Activated naive CD4-positive, alpha-beta T cell treated with anti-CD3 and anti-CD28 coated beads, Interleukin-2, amount 10 ng/mL, durations not matched to agents 7 days and 5 days (primary cell): ENCODE measurements at regions of chr7 and their contacts with region 1.

Region 1: GRCh38 chr7:155598810-155599210 is 45.7 kb upstream of the RBM33 start:
- DNase-seq: peak; percentile 88
- H3K4me3 Mint-ChIP-seq: no peak overlapping the region
- H3K27ac Mint-ChIP-seq: no peak overlapping the region
- H3K4me1 Mint-ChIP-seq: peaks cover 8% of the 10 kb centered on the region
- H3K27me3 Mint-ChIP-seq: peaks cover 57% of the 10 kb centered on the region

Region 2: DNA sequence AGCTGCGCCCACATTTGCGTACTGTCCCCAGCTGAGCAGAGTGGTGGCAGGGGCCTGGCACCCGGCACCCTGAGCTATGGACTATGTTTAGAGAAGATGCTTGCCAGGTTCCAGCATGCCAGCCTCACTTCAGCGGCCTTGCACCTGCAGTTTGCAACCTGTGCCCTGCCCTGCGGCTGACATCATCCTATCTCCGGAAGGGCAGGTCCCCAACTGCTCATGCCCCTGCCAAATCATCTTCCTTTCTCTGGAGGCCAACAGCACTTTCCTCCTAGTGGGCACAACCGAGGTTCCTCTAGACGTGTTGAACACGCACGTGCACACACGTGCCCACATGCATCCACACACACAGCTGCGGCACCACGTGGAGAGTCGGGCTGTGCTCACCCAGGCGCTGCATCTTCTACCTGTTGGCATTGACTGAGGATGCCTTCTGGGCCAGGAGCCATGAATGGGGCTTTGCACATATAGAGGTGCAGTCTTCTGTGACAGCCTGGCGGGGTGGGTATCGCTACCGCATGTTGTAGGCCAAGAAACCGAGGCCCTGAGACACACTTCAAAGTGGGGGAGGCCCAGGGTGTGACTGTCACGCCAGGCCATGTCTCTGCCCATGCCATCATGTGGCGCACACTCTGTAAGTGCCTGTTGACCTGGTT is 76.9 kb before region 1 on chr7:
- CTCF ChIA-PET with region 1: no interaction called
- DNase-seq: no peak
- H3K4me3 Mint-ChIP-seq: no peak overlapping the region
- H3K27ac Mint-ChIP-seq: no peak overlapping the region
- H3K4me1 Mint-ChIP-seq: no peaks in the 10 kb centered on the region
- H3K27me3 Mint-ChIP-seq: peaks cover 64% of the 10 kb centered on the region

Region 3: GRCh38 chr7:155611808-155612447 is 13.1 kb after region 1 on chr7:
- CTCF ChIA-PET with region 1: interaction called, 12 read pairs
- DNase-seq: no peak
- H3K4me3 Mint-ChIP-seq: no peak overlapping the region
- H3K27ac Mint-ChIP-seq: no peak overlapping the region
- H3K4me1 Mint-ChIP-seq: no peaks in the 10 kb centered on the region
- H3K27me3 Mint-ChIP-seq: peaks cover 13% of the 10 kb centered on the region

Region 4: DNA sequence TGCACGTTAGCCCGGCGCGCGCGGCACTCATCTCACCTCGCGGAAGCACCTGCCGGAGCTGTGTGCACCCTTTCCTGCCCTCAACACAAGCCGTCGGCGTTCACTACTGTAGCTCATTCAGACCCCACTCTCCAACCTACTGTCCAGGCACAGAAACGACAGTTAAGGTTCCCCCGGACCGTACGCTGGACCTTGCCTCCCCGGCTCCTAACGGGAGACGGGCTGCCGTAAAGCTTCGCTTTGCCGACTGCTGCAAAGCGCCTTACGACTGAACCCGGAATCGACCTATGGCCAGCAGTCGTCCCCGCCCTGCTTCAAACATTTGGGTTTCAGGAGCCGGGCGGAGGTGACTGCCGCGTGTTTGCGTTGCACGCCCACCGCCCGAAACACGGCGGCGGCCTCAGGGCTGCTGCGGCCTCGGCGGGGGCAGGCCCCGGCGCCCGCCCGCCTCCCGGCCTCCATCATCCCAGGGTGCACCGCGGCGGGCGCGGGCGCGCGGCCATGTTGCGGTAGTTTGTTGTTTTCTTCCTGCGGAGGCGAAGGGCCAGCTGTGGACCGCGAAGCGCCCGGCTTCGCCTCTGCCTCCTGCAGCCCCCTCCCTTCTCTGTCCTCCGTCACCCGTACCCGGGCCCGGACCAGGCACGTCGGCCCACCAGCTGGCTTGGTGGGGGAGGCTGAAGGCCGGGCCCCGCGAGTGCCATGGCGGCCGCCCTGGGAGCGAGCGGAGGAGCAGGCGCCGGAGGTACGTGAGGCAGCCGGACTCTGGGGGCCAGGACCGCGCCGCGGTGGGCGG is 45.6 kb after region 1 on chr7 and contains the start of gene RBM33:
- CTCF ChIA-PET with region 1: no interaction called
- DNase-seq: peak; percentile 83
- H3K4me3 Mint-ChIP-seq: peak within 1 kb of the TSS; percentile 92
- H3K27ac Mint-ChIP-seq: peak within 1 kb of the TSS; percentile 96
- H3K4me1 Mint-ChIP-seq: peaks cover 49% of the 10 kb centered on the region
- H3K27me3 Mint-ChIP-seq: no peaks in the 10 kb centered on the region

Region 5: DNA sequence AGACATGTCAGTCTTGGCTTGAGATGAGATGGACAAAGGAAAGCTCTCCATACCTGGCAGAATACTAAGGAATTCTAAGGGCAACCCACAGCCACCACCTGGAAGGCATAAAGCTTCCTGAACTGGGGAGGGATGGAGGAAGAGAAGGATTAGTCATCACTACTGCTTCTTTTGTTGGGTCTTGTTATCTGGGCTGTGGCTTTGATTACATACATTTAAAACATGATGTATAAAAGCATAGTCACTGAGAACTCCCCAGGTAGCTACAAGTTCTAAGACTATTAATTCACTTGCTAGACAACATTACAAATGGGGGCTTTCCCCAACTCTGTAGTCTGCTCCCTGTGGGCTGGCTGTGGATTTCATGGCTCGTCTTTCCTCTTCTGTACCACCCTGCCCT is 103.8 kb after region 1 on chr7:
- CTCF ChIA-PET with region 1: interaction called, 31 read pairs
- DNase-seq: no peak
- H3K4me3 Mint-ChIP-seq: no peak overlapping the region
- H3K27ac Mint-ChIP-seq: no peak overlapping the region
- H3K4me1 Mint-ChIP-seq: peaks cover 11% of the 10 kb centered on the region
- H3K27me3 Mint-ChIP-seq: no peaks in the 10 kb centered on the region

Region 6: DNA sequence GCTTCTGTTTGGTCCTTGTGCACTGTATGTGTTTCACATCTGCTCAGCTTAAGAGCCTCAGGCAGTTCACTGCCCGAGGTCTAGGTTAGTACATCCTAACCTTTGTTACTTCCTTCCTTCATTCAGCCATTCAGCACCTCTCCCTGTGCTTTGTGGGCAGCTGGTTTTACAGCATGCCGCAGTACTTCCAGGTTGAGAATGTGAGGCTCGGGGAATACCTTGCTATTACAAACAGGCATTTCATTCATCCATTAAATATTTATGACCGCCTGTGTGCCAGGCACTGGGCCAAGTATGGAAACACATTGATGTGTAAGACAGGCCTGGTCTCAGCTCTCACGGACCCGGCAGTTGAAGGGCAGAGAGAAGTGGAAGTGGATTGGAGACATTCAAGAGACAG is 131.0 kb after region 1 on chr7:
- CTCF ChIA-PET with region 1: interaction called, 38 read pairs
- DNase-seq: no peak
- H3K4me3 Mint-ChIP-seq: no peak overlapping the region
- H3K27ac Mint-ChIP-seq: no peak overlapping the region
- H3K4me1 Mint-ChIP-seq: peaks cover 21% of the 10 kb centered on the region
- H3K27me3 Mint-ChIP-seq: no peaks in the 10 kb centered on the region

Region 7: GRCh38 chr7:155738652-155739537 is 140.1 kb after region 1 on chr7:
- CTCF ChIA-PET with region 1: interaction called, 38 read pairs
- DNase-seq: peak; percentile 80
- H3K4me3 Mint-ChIP-seq: peak overlapping the region; percentile 23
- H3K27ac Mint-ChIP-seq: peak overlapping the region; percentile 53
- H3K4me1 Mint-ChIP-seq: peaks cover 49% of the 10 kb centered on the region
- H3K27me3 Mint-ChIP-seq: no peaks in the 10 kb centered on the region

Region 8: GRCh38 chr7:155769701-155770100 is 170.9 kb after region 1 on chr7:
- CTCF ChIA-PET with region 1: interaction called, 201 read pairs
- DNase-seq: no peak
- H3K4me3 Mint-ChIP-seq: no peak overlapping the region
- H3K27ac Mint-ChIP-seq: no peak overlapping the region
- H3K4me1 Mint-ChIP-seq: peaks cover 23% of the 10 kb centered on the region
- H3K27me3 Mint-ChIP-seq: no peaks in the 10 kb centered on the region